ENCODE measurements at regions of chr2 and their contacts with region 1.

Region 1: DNA sequence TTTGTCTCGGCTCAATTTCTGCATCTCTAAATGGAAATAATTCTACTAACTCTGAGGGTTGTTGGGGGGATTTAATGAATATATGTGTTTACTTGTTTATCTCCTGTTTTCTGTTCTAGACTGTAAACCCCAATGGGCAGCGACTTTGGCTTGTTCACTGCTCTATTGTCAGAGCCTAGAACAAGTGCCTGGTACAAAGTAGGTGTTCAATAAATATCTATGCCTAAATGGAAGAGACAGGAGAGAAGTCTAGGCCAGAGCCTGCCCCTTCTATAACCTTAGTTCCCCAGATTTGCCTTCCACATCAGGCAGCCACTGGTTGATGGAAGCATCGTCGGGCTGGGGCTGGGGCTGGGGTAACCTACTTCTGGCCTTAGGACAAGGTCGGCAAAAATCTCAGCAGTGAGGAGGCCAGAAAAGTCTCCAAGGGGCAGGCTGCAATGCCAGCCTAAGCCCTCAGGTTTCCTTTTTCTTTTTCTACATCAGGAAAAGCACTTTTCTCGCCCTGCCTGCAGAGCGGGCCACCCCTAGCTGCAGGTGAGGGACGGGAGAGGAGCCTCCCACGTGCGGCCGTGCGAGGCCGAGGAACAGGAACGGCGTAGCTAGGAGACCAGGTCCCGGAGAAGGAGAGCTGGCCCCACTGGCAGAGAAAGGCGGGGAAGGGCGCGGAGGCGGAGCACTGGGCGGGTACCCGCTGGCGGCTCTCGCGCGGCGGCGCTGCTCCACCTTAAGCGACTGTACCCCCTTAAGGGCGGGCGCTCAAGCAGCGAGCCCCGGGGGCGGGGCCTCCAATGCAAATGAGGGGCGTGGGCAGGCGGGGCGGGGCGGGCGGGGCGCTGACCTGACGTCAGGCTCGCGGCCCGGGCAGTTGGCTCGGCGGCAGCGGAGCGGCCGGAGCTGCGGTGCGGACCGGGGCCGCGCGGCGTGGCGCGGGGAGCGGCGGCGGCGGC is at the start of gene CNNM4:
- DNase-seq: peak; percentile 90

Region 2: GRCh38 chr2:96638144-96639121 is 121.9 kb before region 1 on chr2 and contains the start of gene KANSL3:
- CTCF ChIA-PET with region 1: interaction called, 3 read pairs
- POLR2A ChIA-PET with region 1: interaction called, 12 read pairs
- DNase-seq: peak; percentile 89

Region 3: DNA sequence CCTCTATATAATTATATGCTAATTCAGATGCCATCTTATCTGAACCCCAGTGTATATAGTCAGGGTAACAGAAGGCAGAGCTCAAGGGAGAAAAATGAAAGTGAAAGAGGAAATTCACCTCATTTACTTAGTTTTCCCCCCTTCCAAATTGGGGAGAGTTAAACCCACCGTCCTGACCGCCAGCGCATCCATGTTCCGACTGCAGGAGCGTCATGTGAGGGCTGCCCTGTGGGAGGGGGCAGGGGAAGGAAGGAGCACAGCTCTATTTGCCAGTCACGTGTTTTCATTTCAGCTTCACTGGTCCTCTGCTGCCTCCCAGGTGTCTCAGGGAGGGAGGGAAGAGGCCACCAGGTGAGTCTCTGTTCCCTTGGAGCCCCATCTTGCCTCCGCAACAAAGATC is 13.6 kb after region 1 on chr2:
- CTCF ChIA-PET with region 1: interaction called, 25 read pairs
- POLR2A ChIA-PET with region 1: interaction called, 9 read pairs
- DNase-seq: no peak

Region 4: GRCh38 chr2:96783388-96783787 is 23.1 kb after region 1 on chr2:
- CTCF ChIA-PET with region 1: interaction called, 29 read pairs
- POLR2A ChIA-PET with region 1: interaction called, 3 read pairs
- DNase-seq: no peak

Region 5: GRCh38 chr2:96816128-96816835 is 56.0 kb after region 1 on chr2 and contains the start of gene CNNM3:
- CTCF ChIA-PET with region 1: interaction called, 4 read pairs
- POLR2A ChIA-PET with region 1: interaction called, 15 read pairs
- DNase-seq: peak; percentile 96

Measured in HEK293T (cell line).